Sigmoid colon (tissue), 7 donors: ENCODE measurements at regions of chr4 and their contacts with region 1.

Region 1: DNA sequence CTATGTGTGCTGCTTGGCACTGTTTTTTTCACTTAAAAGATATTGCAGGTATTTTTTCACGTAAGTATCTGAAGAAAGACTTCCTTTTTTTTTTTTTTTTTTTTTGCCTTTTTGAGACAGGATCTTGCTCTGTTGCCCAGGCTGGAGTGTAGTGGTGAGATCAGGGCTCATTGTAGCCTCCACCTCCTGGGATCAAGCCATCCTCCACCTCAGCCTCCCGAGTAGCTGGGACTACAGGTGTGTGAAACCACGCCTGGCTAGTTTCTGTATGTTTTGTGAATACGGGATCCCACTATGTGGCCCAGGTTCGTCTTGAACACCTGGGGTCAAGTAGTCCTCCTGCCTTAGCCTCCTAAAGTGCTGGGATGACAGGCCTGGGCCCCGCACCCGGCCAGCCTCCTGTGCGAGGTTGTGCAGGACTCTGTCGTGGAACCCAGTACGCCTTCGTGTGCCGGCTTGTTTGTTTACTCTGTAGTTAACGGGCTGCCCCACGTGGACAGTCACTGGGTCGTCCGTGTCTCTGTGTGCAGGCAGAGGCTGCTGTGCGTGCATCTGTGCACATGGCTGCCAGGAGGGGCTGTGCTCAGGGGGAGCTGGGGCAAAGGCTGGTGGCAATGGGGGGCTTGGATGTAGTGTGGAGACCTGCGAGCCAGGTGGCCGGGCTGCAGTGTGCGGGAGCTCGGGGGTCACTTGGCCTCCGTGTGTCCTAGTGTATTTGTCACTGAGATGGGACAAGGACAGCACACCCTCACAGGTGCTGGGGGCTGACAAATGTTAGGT is 179.5 kb downstream of the ADRA2C start:
- DNase-seq: no peak
- H3K4me3 ChIP-seq: no peak overlapping the region
- H3K27ac ChIP-seq: no peak overlapping the region
- H3K4me1 ChIP-seq: no peaks in the 10 kb centered on the region
- H3K27me3 ChIP-seq: peaks cover 0 to 7% (median 0%) of the 10 kb centered on the region in 3 donors
- CTCF ChIP-seq: no peak
- EP300 ChIP-seq: no peak
- POLR2A ChIP-seq: no peak

Region 2: DNA sequence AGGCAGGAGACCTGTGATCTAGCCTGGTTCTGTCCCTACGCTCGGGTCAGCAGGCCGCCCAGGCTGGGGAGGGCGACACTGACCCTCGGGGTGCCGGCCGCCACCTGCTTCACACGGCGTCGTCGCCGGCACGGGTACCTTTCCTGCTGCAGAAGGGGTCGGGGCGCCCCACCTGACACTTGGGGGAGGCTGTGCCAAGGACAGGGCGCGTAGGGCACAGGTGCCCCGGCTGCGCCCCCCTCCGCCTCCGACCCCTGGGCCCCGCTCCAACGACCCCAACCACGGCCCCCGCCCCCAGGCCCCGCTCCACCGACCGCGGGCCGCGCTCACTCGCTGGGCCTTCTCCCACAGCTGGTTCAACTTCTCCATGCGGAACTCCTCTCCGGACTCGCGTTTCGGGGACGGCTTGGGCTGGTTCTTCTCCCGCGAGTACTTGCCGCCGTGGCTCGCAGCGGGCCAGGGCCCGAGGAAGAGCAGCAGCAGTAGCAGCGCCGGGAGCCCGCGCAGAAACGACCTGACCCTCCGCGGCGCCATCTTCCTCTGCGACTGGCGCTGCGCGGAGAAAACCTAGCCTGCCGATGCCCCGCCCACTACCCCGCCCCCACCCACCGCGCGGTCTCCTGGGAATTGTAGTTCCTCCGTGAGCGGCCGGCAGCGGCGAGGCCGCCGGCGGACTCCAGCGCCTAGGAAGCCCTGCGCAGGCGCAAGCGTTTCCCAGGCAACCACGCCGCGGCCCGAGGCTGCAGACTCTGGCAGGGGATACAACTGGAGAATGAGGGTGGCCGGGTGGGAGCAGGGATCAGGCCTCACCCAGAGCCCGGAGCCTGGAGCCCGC is 413.6 kb before region 1 on chr4 and contains the start of gene LRPAP1:
- intact Hi-C with region 1: loop called (anchors 10 kb)
- DNase-seq: peak; percentile 95
- H3K4me3 ChIP-seq: peak within 1 kb of the TSS; percentile 67 to 97 (median 85)
- H3K27ac ChIP-seq: peak within 1 kb of the TSS; percentile 70 to 83 (median 76)
- H3K4me1 ChIP-seq: peaks cover 0 to 35% (median 29%) of the 10 kb centered on the region in 4 donors
- H3K27me3 ChIP-seq: no peaks in the 10 kb centered on the region
- CTCF ChIP-seq: no peak
- EP300 ChIP-seq: no peak
- POLR2A ChIP-seq: peak; percentile 89 to 90
- total RNA-seq, gene LRPAP1: 85.3 to 127 (median 99.6) TPM